Posterior cingulate gyrus (tissue), 11 donors: ENCODE measurements at regions of chr9 and their contacts with region 1.

Region 1: DNA sequence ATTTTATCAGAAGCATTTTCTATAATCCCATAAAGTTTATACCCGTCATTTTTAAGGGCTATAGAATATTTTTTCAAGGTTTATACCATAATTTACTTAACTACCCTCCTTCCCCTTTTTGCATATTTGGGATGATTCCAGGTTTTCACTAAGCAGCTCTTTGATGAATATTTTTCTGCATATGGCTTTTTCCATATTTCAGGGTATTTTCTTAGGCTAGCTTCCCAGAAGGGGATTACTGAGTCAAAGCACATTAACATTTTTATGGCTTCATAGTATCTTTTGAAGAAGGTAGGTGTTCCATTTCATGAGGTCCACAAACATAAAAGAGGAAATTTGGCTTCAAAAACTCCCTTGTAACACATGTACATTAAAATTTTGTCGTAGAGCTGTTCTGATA is 14.6 kb upstream of the COL15A1 start:
- DNase-seq: no peak

Region 2: GRCh38 chr9:98665501-98665900 is 263.6 kb before region 1 on chr9:
- intact Hi-C with region 1: no loop called
- DNase-seq: peak in 2 of 10 donors; percentile 18 to 80

Region 3: GRCh38 chr9:98899408-98900056 is 29.5 kb before region 1 on chr9:
- intact Hi-C with region 1: loop called (anchors 1 kb)
- DNase-seq: no peak